ENCODE measurements at regions of chr2 and their contacts with region 1.

Region 1: GRCh38 chr2:178112202-178113152 is at the start of gene RBM45:
- DNase-seq: peak; percentile 83
- H3K4me3 Mint-ChIP-seq: peak within 1 kb of the TSS; percentile 87
- H3K27ac Mint-ChIP-seq: peak within 1 kb of the TSS; percentile 75
- H3K4me1 Mint-ChIP-seq: peaks cover 33% of the 10 kb centered on the region
- H3K27me3 Mint-ChIP-seq: no peaks in the 10 kb centered on the region
- total RNA-seq, gene RBM45: 18.6 and 21.9 TPM in 2 replicates

Region 2: GRCh38 chr2:177392373-177393202 is 719.9 kb before region 1 on chr2 and contains the start of gene AGPS:
- intact Hi-C with region 1: loop called (anchors 5 kb)
- DNase-seq: peak; percentile 80
- H3K4me3 Mint-ChIP-seq: peak within 1 kb of the TSS; percentile 90
- H3K27ac Mint-ChIP-seq: peak within 1 kb of the TSS; percentile 92
- H3K4me1 Mint-ChIP-seq: peaks cover 58% of the 10 kb centered on the region
- H3K27me3 Mint-ChIP-seq: no peaks in the 10 kb centered on the region
- total RNA-seq, gene AGPS: 70.1 and 71.8 TPM in 2 replicates

Region 3: DNA sequence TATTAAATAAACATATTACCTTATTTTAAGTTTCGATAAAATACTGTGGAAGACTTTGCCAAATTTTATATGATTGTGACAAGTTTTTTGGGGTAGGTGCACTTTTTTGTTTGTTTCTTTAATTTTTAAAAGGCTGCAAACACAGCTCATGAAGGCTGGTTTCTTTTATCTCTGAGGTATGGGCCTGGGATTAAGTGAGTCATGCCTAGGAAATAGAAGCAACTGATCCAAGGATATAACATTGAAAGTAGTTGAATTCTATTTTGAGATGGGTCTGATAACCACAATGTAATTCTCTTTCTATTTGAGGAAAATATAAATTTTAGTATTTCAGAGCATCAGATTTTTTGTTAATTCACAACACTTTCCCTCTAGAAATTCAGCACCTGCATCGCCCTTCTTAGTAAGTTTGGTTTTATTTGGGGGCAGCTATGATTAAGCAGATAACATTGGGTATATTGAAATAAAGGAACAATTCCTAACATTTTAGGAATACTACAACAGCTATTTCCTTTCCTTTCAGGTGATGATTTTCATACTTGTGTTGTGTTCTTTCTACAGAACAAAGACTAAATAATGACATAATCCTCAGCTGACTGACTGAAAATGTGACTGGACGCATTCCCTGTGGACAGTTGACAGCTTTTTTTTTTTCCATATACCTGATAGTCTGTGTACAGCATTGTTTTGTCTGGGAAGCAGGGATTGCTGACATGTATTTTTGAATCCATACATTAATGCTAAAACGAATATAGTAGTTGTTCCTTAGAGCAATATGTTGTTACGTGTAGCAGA is 16.6 kb after region 1 on chr2:
- intact Hi-C with region 1: no loop called
- DNase-seq: no peak
- H3K4me3 Mint-ChIP-seq: no peak overlapping the region
- H3K27ac Mint-ChIP-seq: no peak overlapping the region
- H3K4me1 Mint-ChIP-seq: peaks cover 6% of the 10 kb centered on the region
- H3K27me3 Mint-ChIP-seq: no peaks in the 10 kb centered on the region

Region 4: DNA sequence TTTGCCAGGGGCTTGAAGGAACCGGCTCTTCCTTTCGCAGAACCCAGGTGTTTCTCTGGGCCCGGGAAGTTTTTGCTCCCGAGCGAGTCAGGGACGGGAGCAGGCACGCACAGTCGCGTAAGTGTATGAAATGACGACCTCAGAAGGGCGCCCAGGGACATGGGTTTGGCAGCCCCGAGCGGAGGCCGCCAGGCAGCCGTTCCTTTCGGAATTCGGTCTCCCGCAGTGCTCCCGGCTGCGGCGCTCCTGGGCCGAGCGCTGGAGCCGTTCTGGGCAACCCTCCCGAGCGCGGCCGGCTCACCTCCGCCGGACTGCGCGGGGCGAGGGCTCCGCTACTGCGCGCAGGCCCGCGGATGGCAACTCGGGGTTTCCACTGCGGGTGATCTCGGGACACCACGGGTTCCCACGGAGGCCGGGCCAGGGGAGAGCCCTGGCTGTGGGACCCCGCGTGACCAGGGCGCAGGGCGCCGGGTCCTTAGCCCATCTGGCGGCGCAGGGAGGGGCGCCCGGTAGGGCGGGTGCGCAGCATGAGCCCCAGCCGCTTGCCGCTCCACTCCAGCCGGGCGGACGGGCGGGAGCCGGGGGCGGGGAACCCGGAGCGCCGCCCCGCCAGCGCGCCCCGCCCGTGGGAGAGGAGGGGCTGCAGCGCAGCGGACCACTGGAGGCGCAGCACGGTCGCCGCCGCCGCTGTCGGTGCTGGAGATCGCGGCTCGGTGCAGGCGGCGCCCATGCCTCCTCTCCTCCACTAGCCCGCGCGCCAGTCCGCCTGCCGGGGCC is 81.5 kb after region 1 on chr2 and contains the start of gene OSBPL6:
- intact Hi-C with region 1: loop called (anchors 1 kb)
- DNase-seq: peak; percentile 75
- H3K4me3 Mint-ChIP-seq: peak within 1 kb of the TSS; percentile 80
- H3K27ac Mint-ChIP-seq: no peak within 1 kb of the TSS
- H3K4me1 Mint-ChIP-seq: peaks cover 11% of the 10 kb centered on the region
- H3K27me3 Mint-ChIP-seq: peaks cover 57% of the 10 kb centered on the region
- total RNA-seq, gene OSBPL6: 1.5 and 1.9 TPM in 2 replicates

Region 5: GRCh38 chr2:178298785-178299212 is 186.3 kb after region 1 on chr2:
- intact Hi-C with region 1: loop called (anchors 5 kb)
- DNase-seq: no peak
- H3K4me3 Mint-ChIP-seq: no peak overlapping the region
- H3K27ac Mint-ChIP-seq: no peak overlapping the region
- H3K4me1 Mint-ChIP-seq: no peaks in the 10 kb centered on the region
- H3K27me3 Mint-ChIP-seq: peaks cover 10% of the 10 kb centered on the region

Region 6: GRCh38 chr2:178414266-178415247 is 302.1 kb after region 1 on chr2:
- intact Hi-C with region 1: loop called (anchors 1 kb)
- DNase-seq: peak; percentile 76
- H3K4me3 Mint-ChIP-seq: peak overlapping the region; percentile 87
- H3K27ac Mint-ChIP-seq: peak overlapping the region; percentile 97
- H3K4me1 Mint-ChIP-seq: peaks cover 70% of the 10 kb centered on the region
- H3K27me3 Mint-ChIP-seq: no peaks in the 10 kb centered on the region

Region 7: DNA sequence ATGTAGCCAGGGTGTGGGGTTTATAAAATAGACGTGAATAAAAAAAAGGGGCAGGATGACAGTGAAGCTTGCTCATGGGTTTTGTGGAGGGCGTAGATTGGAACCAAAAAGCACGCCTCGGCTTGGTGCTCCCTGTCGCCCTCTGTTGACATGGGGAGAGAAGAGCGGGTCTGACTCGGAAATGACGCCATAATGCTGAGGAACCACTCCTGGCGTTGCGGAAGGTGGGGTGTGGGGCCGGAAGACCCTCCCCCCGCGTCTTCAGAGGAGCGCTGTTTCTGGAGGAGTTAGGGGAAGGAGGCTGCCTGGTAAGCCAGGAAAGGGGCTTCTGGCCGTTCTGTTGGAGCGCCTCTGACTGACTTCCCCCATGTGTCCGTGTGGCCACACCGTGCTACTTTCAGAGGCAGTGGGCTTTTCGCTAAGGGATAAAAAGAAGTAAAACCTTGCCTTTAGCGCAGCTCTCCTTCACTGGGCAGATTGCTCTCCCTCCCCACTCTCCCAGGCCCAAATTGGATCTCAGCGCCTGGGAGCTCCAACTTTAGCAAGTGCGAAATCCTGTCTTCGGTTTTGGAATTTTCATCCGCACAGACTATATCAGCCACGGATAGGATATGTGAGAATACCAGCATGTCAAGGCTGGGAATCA is 410.6 kb after region 1 on chr2:
- intact Hi-C with region 1: loop called (anchors 5 kb)
- DNase-seq: peak; percentile 80
- H3K4me3 Mint-ChIP-seq: peak overlapping the region; percentile 99
- H3K27ac Mint-ChIP-seq: peak overlapping the region; percentile 92
- H3K4me1 Mint-ChIP-seq: peaks cover 42% of the 10 kb centered on the region
- H3K27me3 Mint-ChIP-seq: no peaks in the 10 kb centered on the region